Activated naive CD4-positive, alpha-beta T cell treated with anti-CD3 and anti-CD28 coated beads for 36 hours (primary cell): ENCODE measurements at regions of chr5 and their contacts with region 1.

Region 1: DNA sequence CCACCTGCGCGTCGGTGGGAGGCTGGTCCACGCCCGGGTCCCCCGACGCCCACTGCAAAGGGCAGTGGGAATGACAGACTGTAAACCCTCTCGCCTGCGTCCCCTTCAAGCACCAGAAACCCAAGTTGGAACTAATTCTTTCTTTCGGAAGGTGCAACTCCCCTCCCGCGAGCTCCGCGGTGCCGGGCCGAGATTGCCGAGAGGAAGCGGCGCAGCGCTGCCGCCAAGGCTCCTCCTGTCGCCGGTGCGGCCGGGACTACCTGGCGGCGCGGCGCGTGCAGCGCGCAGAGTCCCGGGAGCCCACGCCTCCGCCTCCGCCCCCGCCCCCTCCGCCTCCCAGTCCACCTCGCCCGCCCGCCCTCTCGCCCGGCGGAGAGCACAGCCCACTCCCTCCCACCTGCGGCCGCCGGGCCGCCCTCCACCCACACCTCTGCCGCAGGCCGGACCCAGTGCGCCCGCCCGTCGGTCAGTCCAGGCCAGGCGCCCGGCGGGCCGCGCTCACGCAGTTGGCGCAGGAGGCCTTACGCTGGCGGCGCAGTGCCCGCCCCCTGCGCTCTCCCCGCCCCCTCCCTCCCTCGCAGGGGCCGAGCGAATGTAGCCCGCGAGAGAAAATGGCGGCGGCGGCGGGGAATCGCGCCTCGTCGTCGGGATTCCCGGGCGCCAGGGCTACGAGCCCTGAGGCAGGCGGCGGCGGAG is at the start of gene MAP3K1:
- DNase-seq: peak; percentile 74
- H3K4me3 Mint-ChIP-seq: peak within 1 kb of the TSS; percentile 88
- H3K27ac Mint-ChIP-seq: peak within 1 kb of the TSS; percentile 87
- H3K4me1 Mint-ChIP-seq: peaks cover 34% of the 10 kb centered on the region
- H3K27me3 Mint-ChIP-seq: no peaks in the 10 kb centered on the region
- total RNA-seq, gene MAP3K1: 18.2 to 19.2 TPM

Region 2: GRCh38 chr5:56440871-56441740 is 374.0 kb before region 1 on chr5:
- CTCF ChIA-PET with region 1: no interaction called
- intact Hi-C with region 1: no loop called
- DNase-seq: no peak
- H3K4me3 Mint-ChIP-seq: no peak overlapping the region
- H3K27ac Mint-ChIP-seq: no peak overlapping the region
- H3K4me1 Mint-ChIP-seq: peaks cover 6% of the 10 kb centered on the region
- H3K27me3 Mint-ChIP-seq: no peaks in the 10 kb centered on the region

Region 3: DNA sequence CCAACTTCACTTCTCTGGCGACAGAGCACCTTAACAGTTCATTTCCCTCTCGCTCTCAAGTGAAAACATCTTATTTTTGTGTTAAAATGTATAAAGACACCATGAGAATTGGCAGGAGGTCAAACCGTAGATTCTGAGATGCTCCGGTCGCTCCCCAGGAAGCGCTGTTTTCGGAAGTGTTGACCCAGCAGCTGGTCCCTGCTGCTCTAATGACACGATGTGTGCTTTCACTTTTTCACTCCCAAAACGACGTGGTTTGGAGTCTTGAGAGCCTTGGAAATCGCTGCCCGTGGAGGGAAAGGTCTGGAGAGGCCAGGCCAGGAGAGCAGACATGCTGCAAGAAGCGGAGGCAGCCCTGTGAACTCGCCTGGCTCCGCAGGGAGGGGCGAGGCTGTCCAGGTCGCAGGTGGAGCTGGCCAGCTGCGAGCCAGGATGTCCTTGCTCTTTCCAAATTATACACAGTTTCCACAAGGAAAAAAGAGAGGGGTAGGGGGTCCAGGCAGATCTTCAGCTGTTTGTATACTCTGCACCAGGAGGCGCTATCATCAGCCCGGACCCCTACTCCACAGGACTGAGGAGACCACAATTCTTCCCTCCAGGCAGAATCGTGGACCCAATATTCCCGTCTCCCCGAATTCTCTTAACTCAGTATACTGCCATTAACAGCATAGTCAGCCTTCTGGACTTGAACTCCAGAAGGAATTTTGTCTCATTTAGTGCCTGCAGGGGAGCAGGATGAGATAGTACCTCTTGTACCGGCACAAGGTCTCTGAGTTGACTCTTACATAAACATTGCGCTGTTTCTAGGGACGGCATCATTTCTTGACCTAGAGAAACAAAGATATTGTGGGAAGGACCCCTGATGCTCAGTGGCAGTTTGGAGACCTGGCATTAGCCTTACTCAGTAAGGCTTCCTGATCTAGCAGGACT is 333.4 kb before region 1 on chr5:
- CTCF ChIA-PET with region 1: no interaction called
- intact Hi-C with region 1: loop called (anchors 1 kb)
- DNase-seq: peak; percentile 14
- H3K4me3 Mint-ChIP-seq: peak overlapping the region; percentile 73
- H3K27ac Mint-ChIP-seq: no peak overlapping the region
- H3K4me1 Mint-ChIP-seq: peaks cover 30% of the 10 kb centered on the region
- H3K27me3 Mint-ChIP-seq: no peaks in the 10 kb centered on the region

Region 4: DNA sequence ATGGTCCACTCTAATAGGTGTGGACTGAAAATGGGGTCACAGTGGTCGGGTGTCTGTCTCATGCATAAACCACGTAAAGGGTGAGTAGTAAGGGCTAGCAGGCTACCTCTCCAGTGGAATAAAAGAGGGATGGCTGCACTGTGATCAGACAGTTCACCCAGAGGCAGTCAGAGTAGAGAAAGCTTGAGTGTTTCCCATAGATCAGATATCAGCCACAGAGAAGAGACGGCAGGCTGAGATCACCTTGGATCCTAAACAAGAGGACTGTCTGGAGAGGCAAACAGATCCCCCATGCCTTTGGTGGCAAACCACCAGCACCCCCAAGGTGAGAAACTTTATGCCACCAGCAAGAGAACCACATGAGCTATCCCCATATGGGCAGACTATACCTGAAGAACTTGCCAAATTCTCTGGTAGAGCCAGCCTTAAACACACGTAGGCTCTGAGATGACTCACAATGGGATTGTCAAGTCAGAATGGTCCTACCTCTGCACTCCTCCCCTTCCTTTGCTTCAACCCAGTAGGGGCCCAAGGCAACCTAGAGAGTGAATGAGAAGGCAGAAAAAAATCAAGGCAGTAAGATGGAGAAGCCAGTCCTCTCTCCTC is 204.9 kb before region 1 on chr5:
- CTCF ChIA-PET with region 1: no interaction called
- intact Hi-C with region 1: loop called (anchors 5 kb)
- DNase-seq: peak; percentile 74
- H3K4me3 Mint-ChIP-seq: no peak overlapping the region
- H3K27ac Mint-ChIP-seq: peak overlapping the region; percentile 59
- H3K4me1 Mint-ChIP-seq: peaks cover 74% of the 10 kb centered on the region
- H3K27me3 Mint-ChIP-seq: no peaks in the 10 kb centered on the region

Region 5: GRCh38 chr5:56737002-56737621 is 78.0 kb before region 1 on chr5:
- CTCF ChIA-PET with region 1: no interaction called
- intact Hi-C with region 1: loop called (anchors 1 kb)
- DNase-seq: peak; percentile 32
- H3K4me3 Mint-ChIP-seq: no peak overlapping the region
- H3K27ac Mint-ChIP-seq: peak overlapping the region; percentile 9
- H3K4me1 Mint-ChIP-seq: peaks cover 35% of the 10 kb centered on the region
- H3K27me3 Mint-ChIP-seq: no peaks in the 10 kb centered on the region

Region 6: DNA sequence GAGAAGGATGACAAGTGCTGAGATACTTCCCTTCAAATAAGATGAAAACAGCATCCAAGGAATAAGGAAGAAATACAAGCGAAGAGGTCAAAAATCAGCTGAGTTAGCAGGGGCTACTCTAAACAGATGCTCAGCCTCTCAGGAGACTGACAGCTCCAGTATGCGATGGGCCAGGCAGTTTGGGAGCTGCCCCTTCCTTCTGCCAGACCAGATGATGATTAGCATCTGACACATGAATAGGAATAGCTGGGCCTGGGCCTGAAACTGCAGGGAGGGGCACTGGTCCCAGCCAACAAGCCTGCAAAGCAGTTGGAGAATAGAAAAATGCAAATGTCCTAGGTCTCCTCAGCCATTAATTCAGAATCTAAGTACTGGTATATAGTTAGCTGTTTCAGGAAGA is 12.9 kb before region 1 on chr5:
- CTCF ChIA-PET with region 1: no interaction called
- intact Hi-C with region 1: no loop called
- DNase-seq: no peak
- H3K4me3 Mint-ChIP-seq: no peak overlapping the region
- H3K27ac Mint-ChIP-seq: no peak overlapping the region
- H3K4me1 Mint-ChIP-seq: peaks cover 14% of the 10 kb centered on the region
- H3K27me3 Mint-ChIP-seq: no peaks in the 10 kb centered on the region

Region 7: DNA sequence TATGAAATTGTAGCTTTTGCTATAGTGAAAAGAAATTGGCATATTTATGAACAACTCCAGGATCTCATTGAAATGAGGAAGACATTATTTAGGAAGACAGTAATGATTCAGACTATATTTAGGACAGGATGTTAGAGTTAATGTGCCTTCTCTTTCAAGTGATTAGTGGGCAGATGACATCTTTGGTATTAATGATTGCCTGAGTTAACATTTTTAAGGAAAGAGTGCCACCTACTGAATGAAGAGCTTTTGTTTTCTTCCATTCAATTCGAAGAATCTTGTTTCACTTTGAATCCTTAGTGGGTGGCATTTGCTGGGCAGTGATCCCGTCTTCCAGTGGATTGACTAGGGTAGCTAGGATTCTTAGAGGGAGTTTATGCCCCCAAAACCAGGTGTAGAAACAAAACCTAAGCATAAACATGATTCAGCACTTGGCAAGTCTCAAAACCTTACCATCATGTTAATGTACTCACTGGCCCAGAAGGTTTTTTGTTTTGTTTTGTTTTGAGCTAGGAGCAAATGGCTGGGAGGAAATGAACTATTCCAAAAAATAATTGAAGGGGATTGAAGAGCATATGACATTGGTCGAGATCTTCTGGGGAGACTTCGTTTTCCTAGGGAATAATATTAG is 23.4 kb after region 1 on chr5:
- CTCF ChIA-PET with region 1: interaction called, 18 read pairs
- intact Hi-C with region 1: loop called (anchors 1 kb)
- DNase-seq: no peak
- H3K4me3 Mint-ChIP-seq: peak overlapping the region; percentile 47
- H3K27ac Mint-ChIP-seq: peak overlapping the region; percentile 74
- H3K4me1 Mint-ChIP-seq: peaks cover 75% of the 10 kb centered on the region
- H3K27me3 Mint-ChIP-seq: no peaks in the 10 kb centered on the region

Region 8: DNA sequence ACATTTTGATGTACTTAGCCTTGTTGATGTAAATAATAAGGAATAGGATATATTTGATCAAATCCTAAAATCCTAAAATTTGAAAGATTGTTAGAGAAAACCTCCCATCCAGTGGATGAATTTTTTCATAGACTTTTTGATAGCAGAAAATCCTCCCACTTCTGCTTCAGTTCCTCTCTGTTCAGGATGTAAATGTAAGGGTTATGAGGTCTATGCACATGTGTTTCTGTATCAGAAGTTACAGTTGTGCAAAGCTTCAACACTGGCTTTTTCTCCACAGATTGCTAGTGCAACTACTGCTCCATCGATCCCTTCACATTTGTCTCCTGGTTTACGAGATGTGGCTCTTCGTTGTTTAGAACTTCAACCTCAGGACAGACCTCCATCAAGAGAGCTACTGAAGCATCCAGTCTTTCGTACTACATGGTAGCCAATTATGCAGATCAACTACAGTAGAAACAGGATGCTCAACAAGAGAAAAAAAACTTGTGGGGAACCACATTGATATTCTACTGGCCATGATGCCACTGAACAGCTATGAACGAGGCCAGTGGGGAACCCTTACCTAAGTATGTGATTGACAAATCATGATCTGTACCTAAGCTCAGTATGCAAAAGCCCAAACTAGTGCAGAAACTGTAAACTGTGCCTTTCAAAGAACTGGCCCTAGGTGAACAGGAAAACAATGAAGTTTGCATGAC is 78.3 kb after region 1 on chr5:
- CTCF ChIA-PET with region 1: no interaction called
- intact Hi-C with region 1: no loop called
- DNase-seq: no peak
- H3K4me3 Mint-ChIP-seq: no peak overlapping the region
- H3K27ac Mint-ChIP-seq: no peak overlapping the region
- H3K4me1 Mint-ChIP-seq: peaks cover 2% of the 10 kb centered on the region
- H3K27me3 Mint-ChIP-seq: no peaks in the 10 kb centered on the region

Region 9: DNA sequence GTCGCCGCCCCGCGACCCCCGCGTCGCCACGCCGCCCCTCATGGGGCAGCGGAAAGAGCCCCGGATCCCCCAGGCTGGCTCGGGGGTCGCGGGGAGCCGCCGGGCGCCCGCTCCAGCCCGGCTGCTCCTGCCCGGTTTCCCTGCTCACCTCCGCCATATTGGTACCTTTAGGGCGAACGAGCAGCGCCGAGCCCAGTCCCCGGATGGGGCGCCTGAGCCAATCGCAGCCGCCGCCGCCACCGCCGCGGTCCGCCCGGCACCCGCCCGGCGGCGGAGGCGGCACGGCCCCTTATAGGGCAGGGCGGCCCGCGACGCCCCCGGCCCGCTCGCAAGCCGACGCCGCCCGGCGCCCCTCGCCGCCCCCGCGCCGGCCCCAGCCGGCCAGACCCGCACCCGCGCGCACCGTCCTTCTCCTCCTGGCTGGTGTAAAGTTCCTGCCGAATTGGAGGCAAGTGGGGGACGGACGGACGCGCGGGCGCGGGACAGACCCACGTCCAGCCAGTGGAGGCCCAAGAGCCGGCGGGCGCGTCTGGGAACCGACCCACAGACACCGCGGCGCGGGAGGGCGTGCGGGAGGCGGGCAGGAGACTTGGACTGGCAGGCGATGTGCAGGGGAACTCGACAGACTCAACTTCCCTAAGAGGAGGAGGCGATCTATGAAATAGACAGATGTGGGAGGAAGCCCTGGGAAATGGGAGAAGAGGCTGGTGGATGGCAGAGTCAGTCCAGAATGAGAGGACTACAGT is 137.0 kb after region 1 on chr5 and contains the start of gene MIER3:
- CTCF ChIA-PET with region 1: no interaction called
- intact Hi-C with region 1: loop called (anchors 2 kb)
- DNase-seq: peak; percentile 83
- H3K4me3 Mint-ChIP-seq: peak within 1 kb of the TSS; percentile 85
- H3K27ac Mint-ChIP-seq: peak within 1 kb of the TSS; percentile 9
- H3K4me1 Mint-ChIP-seq: peaks cover 20% of the 10 kb centered on the region
- H3K27me3 Mint-ChIP-seq: peaks cover 10% of the 10 kb centered on the region
- total RNA-seq, gene MIER3: 11.1 to 12.3 TPM